ENCODE measurements at regions of chr18 and their contacts with region 1.

Region 1: GRCh38 chr18:46474487-46475389 is 182.3 kb downstream of the LOXHD1 start:
- DNase-seq: no peak
- H3K4me3 ChIP-seq: no peak overlapping the region
- H3K27ac ChIP-seq: no peak overlapping the region
- H3K4me1 ChIP-seq: peaks cover 0 to 3% of the 10 kb centered on the region in 2 donors
- H3K27me3 ChIP-seq: no peaks in the 10 kb centered on the region
- CTCF ChIP-seq: no peak
- POLR2A ChIP-seq: no peak

Region 2: GRCh38 chr18:46173393-46174341 is 301.1 kb before region 1 on chr18:
- intact Hi-C with region 1: loop called (anchors 10 kb)
- DNase-seq: peak; percentile 88 to 94
- H3K4me3 ChIP-seq: peak overlapping the region; percentile 99 to 100 (median 99)
- H3K27ac ChIP-seq: peak overlapping the region; percentile 93 to 95
- H3K4me1 ChIP-seq: no peaks in the 10 kb centered on the region
- H3K27me3 ChIP-seq: no peaks in the 10 kb centered on the region
- CTCF ChIP-seq: peak; percentile 67 to 85 (median 71)
- POLR2A ChIP-seq: no peak